IMR-90 (cell line): ENCODE measurements at regions of chr5 and their contacts with region 1.

Region 1: DNA sequence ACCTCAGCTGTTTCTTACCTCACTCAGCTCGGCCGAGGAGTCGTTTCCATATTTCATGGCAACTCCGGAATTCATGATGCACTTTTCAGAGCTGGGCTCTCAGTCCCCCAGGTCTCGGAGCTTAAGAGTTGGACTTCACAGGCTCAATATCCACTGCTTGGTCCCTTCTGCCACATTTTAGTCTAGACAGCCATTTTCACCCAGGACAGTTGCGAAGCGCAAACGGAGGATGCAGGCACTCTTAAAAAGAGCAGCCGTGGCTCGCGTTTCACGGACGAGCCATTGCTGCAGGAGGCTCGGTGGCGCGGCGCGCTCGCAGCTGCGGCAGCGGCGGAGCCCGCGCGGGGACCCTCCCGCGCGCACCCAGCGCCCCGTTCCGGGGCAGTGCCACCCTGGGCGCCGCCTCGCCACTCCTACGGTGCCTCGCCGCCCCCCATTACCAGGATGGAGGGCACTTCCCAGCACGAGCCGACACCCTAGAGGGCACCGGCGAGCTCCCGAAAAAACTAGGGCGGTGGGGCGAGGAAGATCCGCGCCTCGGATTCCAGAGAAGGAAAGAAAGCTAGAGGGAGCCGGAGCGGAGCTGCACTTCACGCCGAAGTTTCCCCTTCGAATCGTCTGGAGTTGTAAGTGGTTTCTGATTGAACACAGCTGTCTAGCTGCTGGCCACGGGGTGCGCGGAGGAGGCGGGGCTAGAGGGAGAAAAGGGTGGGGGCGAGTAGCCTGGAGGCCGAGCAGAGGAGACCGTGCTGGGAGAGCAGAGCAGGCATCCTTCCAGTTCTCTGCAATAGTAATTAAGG is 140.3 kb downstream of the TSSK1B start:
- DNase-seq: peak; percentile 93
- ATAC-seq: peak; percentile 89
- H3K4me3 ChIP-seq: peak overlapping the region; percentile 91
- H3K27ac ChIP-seq: peak overlapping the region; percentile 87
- H3K4me1 ChIP-seq: peaks cover 8% of the 10 kb centered on the region; the same call in 1 of the 2 replicates
- H3K27me3 ChIP-seq: no peaks in the 10 kb centered on the region
- CTCF ChIP-seq: no peak; the same call in 1 of the 2 replicates
- POLR2A ChIP-seq: peak; percentile 93
- RAD21 ChIP-seq: peak; percentile 22

Region 2: DNA sequence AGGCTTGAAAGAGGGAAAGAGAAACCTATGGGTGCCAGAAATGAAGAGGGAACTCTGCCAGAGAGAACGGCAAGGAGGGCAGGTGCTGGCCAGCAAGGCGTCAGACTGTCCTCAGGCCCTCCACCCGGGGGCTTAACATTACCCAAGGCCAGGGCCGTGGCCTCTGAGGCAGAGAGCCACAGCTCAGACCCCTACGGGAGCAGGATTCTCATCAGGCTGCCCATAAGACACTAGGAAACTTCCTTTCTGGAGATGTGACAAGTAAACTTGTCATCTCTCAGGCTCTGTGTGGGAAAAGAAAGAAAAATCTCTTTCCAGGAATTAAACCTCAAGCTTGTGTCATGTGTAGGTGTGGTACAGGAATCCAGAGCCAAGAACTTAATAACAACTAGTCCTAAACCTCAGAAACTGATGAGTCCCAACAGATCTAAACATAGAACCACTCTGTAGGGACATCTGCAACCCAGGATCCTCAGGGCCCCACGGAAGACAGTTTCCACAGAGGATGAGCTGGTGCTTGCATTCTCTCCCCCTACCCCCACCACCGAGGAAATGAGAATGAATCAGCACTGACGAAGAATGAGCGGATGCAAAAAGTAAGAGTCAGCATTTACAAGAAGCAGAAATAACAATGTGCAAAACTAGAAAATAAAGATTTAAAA is 243.7 kb before region 1 on chr5:
- CTCF ChIA-PET with region 1: no interaction called
- POLR2A ChIA-PET with region 1: interaction called, 11 read pairs
- dilution Hi-C with region 1: no loop called
- in situ Hi-C with region 1: no loop called
- intact Hi-C with region 1: no loop called
- DNase-seq: peak; percentile 84
- ATAC-seq: peak; percentile 91
- H3K4me3 ChIP-seq: no peak overlapping the region
- H3K27ac ChIP-seq: 0 out of 2 replicates have a peak overlapping the region, but pooled peaks have one; percentile 3
- H3K4me1 ChIP-seq: peaks cover 18% of the 10 kb centered on the region
- H3K27me3 ChIP-seq: no peaks in the 10 kb centered on the region
- CTCF ChIP-seq: no peak
- POLR2A ChIP-seq: no peak
- RAD21 ChIP-seq: no peak

Region 3: DNA sequence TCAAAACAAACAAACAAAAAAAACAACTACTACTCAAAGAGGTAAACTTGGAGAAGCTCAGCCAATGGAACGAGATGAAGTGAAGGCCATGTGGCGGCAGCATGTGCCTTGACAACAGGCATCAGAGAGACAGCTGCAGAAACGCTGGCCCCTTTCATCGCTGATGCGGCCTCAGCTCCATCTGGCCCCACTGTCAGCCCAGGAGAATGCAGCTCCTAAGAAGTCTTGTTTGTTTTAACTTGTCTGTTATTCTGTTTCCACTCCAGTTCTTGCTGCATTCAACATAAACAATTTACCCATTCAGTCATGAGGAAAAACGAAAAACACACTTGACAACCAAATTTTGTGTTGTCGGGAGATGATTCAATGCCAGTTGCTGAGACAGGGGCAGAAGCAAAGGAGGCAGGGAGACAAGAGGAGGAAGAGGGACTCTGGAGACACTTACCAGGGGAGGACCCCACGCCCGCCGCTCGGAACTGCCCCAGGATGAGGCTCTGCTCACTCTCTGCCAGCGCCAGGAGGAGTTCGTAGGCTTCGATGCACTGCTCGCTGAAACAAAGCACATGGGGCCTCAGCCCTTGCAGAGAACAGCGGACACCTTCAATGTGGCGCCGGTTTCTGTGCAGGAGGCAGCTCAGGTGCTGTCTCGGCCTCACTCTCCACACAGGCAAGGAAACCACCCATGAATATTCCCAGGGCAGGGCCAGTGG is 226.7 kb before region 1 on chr5:
- CTCF ChIA-PET with region 1: interaction called, 3 read pairs
- POLR2A ChIA-PET with region 1: interaction called, 15 read pairs
- dilution Hi-C with region 1: no loop called
- in situ Hi-C with region 1: no loop called
- intact Hi-C with region 1: loop called (anchors 10 kb)
- DNase-seq: peak; percentile 94
- ATAC-seq: peak; percentile 88
- H3K4me3 ChIP-seq: no peak overlapping the region
- H3K27ac ChIP-seq: peak overlapping the region; percentile 45
- H3K4me1 ChIP-seq: peaks cover 14% of the 10 kb centered on the region
- H3K27me3 ChIP-seq: no peaks in the 10 kb centered on the region
- CTCF ChIP-seq: 0 out of 2 replicates have a peak, but pooled peaks have one; percentile 3
- POLR2A ChIP-seq: no peak
- RAD21 ChIP-seq: peak; percentile 32; the same call in 1 of the 2 replicates

Region 4: GRCh38 chr5:113204525-113205161 is 89.9 kb before region 1 on chr5:
- CTCF ChIA-PET with region 1: no interaction called
- POLR2A ChIA-PET with region 1: no interaction called
- dilution Hi-C with region 1: no loop called
- in situ Hi-C with region 1: no loop called
- intact Hi-C with region 1: loop called (anchors 5 kb)
- DNase-seq: peak; percentile 64
- ATAC-seq: peak; percentile 30; the same call in 1 of the 2 replicates
- H3K4me3 ChIP-seq: no peak overlapping the region
- H3K27ac ChIP-seq: no peak overlapping the region
- H3K4me1 ChIP-seq: peaks cover 18% of the 10 kb centered on the region
- H3K27me3 ChIP-seq: no peaks in the 10 kb centered on the region
- CTCF ChIP-seq: no peak
- POLR2A ChIP-seq: no peak
- RAD21 ChIP-seq: no peak

Region 5: GRCh38 chr5:113232667-113233066 is 61.8 kb before region 1 on chr5:
- CTCF ChIA-PET with region 1: no interaction called
- POLR2A ChIA-PET with region 1: no interaction called
- dilution Hi-C with region 1: no loop called
- in situ Hi-C with region 1: no loop called
- intact Hi-C with region 1: no loop called
- DNase-seq: no peak
- ATAC-seq: peak; percentile 48
- H3K4me3 ChIP-seq: no peak overlapping the region
- H3K27ac ChIP-seq: no peak overlapping the region
- H3K4me1 ChIP-seq: peaks cover 7% of the 10 kb centered on the region
- H3K27me3 ChIP-seq: no peaks in the 10 kb centered on the region
- CTCF ChIP-seq: no peak
- POLR2A ChIP-seq: no peak
- RAD21 ChIP-seq: no peak

Region 6: DNA sequence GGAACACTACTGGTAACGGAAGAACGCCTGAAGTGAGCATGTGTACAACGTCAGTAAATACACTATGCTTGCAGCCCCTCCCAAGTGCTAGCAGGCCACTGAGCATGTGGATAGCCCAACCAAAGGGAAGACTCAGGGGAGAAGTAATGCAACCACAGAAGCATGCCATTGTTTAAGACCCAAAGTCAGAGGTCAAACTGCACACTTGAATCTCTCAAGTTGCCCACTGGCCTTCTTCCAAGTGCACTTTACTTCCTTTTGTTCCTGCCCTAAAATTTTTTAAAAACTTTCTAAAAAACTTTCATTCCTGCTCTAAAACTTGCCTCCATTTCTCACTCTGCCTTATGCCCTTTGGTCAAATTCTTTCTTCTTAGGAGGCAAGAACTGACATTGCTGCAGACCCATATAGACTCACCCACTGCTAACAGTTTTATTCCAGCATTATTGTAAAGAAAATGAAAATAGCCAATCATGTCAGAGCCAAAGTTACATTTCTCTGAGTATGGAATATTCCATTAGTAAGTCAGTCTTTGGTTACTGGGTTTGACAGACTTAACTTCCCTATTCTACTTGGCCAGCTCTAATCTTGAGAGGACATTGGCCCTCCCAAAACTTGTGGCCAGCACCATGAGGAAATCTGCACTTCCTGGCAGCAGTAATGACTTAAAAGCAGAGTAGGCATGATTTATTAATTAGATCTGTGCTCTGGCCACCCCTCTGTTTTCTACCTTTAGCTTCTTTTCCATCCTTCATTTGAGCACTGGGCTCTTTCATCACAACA is 63.4 kb after region 1 on chr5:
- CTCF ChIA-PET with region 1: no interaction called
- POLR2A ChIA-PET with region 1: no interaction called
- dilution Hi-C with region 1: no loop called
- in situ Hi-C with region 1: no loop called
- intact Hi-C with region 1: no loop called
- DNase-seq: no peak
- ATAC-seq: no peak
- H3K4me3 ChIP-seq: no peak overlapping the region
- H3K27ac ChIP-seq: no peak overlapping the region
- H3K4me1 ChIP-seq: peaks cover 5% of the 10 kb centered on the region; the same call in 1 of the 2 replicates
- H3K27me3 ChIP-seq: no peaks in the 10 kb centered on the region
- CTCF ChIP-seq: no peak
- POLR2A ChIP-seq: no peak
- RAD21 ChIP-seq: no peak